ENCODE measurements at regions of chr7 and their contacts with region 1.

Region 1: GRCh38 chr7:142853739-142854371 is 1.0 kb upstream of the EPHB6 start:
- H3K4me3 ChIP-seq: peak overlapping the region; percentile 51
- H3K27ac ChIP-seq: no peak overlapping the region; the same call in 1 of the 2 replicates
- H3K4me1 ChIP-seq: no peaks in the 10 kb centered on the region
- CTCF ChIP-seq: peak; percentile 67

Region 2: GRCh38 chr7:142669074-142669654 is 184.7 kb before region 1 on chr7:
- CTCF ChIA-PET with region 1: no interaction called
- POLR2A ChIA-PET with region 1: no interaction called
- H3K4me3 ChIP-seq: no peak overlapping the region
- H3K27ac ChIP-seq: no peak overlapping the region
- H3K4me1 ChIP-seq: no peaks in the 10 kb centered on the region
- CTCF ChIP-seq: no peak

Region 3: GRCh38 chr7:142866361-142867058 is 12.7 kb after region 1 on chr7:
- CTCF ChIA-PET with region 1: interaction called, 24 read pairs
- POLR2A ChIA-PET with region 1: no interaction called
- H3K4me3 ChIP-seq: no peak overlapping the region
- H3K27ac ChIP-seq: no peak overlapping the region
- H3K4me1 ChIP-seq: no peaks in the 10 kb centered on the region
- CTCF ChIP-seq: peak; percentile 38; the same call in 1 of the 2 replicates